GM12878 (cell line): ENCODE measurements at regions of chr2 and their contacts with region 1.

Region 1: GRCh38 chr2:64767670-64768468 is 114.2 kb upstream of the SERTAD2 start:
- DNase-seq: no peak
- ATAC-seq: peak; percentile 94
- H3K4me3 ChIP-seq: peak overlapping the region; percentile 84
- H3K27ac ChIP-seq: peak overlapping the region; percentile 87
- H3K4me1 ChIP-seq: peaks cover 12% of the 10 kb centered on the region
- H3K27me3 ChIP-seq: no peaks in the 10 kb centered on the region
- CTCF ChIP-seq: peak in 2 of 3 experiments; percentile 7 to 29; a peak in 2 of 6 replicates
- EP300 ChIP-seq: peak in 1 of 2 experiments; percentile 40; a peak in 2 of 4 replicates
- POLR2A ChIP-seq: peak; percentile 78
- RAD21 ChIP-seq: no peak

Region 2: DNA sequence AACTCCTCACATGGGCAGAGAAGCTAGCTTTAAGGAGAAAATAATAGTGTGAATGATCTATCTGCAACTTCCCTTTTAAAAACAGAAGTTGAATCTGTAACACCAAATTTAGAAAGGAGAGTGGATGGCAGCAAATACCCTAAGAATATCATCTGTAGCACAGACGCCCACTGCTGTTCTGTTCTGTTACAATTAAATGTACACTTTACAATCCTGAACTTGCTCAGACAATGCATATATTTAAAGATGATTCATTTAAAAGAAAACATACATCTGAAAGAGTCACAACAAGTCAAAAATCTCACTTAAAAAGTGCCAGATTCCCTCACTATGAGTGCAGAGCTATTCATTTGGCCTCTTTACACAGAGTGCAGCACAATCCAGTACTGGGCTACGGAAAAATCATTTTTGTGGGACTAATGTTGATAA is 106.1 kb before region 1 on chr2:
- CTCF ChIA-PET with region 1: interaction called, 4 read pairs
- POLR2A ChIA-PET with region 1: no interaction called
- RAD21 ChIA-PET with region 1: interaction called, 7 read pairs
- SMC1A ChIA-PET with region 1: interaction called, 12 read pairs
- in situ Hi-C with region 1: no loop called
- intact Hi-C with region 1: no loop called
- DNase-seq: no peak
- ATAC-seq: peak; percentile 81
- H3K4me3 ChIP-seq: no peak overlapping the region
- H3K27ac ChIP-seq: peak overlapping the region; percentile 56; the same call in 1 of the 2 replicates
- H3K4me1 ChIP-seq: peaks cover 40% of the 10 kb centered on the region
- H3K27me3 ChIP-seq: no peaks in the 10 kb centered on the region
- CTCF ChIP-seq: peak in 1 of 3 experiments; percentile 23; a peak in 1 of 6 replicates
- EP300 ChIP-seq: peak in 1 of 2 experiments; percentile 33; a peak in 1 of 4 replicates
- POLR2A ChIP-seq: no peak
- RAD21 ChIP-seq: no peak

Region 3: DNA sequence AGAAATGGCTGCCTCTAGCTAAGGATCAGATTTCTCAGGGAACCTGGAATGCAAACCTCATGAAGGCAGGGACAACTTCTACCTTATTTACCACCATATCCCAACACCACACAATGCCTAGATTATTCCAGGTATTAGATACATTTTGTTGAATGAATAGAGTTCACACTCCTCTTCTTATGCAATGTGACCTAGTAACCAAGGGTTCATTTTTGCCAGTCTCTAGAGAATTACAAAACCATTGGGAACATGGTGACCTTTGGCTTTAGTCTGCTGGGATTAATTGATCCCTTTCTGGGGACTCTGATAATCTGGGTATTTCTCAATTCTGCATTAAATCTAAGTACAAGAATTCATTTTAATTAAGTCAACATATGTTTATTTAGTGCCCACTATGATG is 79.0 kb before region 1 on chr2:
- CTCF ChIA-PET with region 1: no interaction called
- POLR2A ChIA-PET with region 1: no interaction called
- RAD21 ChIA-PET with region 1: no interaction called
- SMC1A ChIA-PET with region 1: no interaction called
- in situ Hi-C with region 1: no loop called
- intact Hi-C with region 1: no loop called
- DNase-seq: no peak
- ATAC-seq: no peak
- H3K4me3 ChIP-seq: no peak overlapping the region
- H3K27ac ChIP-seq: no peak overlapping the region
- H3K4me1 ChIP-seq: no peaks in the 10 kb centered on the region
- H3K27me3 ChIP-seq: no peaks in the 10 kb centered on the region
- CTCF ChIP-seq: no peak
- EP300 ChIP-seq: no peak
- POLR2A ChIP-seq: no peak
- RAD21 ChIP-seq: no peak

Region 4: DNA sequence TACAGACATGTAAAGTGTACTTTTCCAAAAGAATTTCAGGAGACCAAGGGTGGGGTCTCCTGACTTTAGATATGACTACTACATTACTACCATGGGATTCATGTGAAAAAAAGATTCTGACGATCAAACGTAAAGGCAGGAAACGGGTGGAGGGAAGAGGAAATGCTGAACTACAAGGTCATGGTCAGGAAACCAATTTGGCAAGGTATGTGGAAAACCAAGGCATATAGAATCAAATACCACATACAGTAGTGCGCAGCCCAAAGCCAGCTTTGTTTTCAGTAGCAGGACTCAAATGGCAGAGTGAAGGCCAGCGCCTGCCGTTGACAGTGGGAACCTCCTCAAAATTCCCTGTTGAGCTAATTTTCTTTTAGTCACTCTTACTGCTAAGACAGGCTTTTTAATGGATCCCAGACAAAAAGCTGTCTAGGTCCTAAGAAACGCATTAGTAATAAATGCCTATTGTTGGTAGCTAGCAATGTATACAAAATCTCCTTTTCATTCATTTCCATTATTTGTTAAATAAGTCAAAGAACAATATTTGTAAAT is 56.5 kb before region 1 on chr2:
- CTCF ChIA-PET with region 1: no interaction called
- POLR2A ChIA-PET with region 1: no interaction called
- RAD21 ChIA-PET with region 1: no interaction called
- SMC1A ChIA-PET with region 1: no interaction called
- in situ Hi-C with region 1: no loop called
- intact Hi-C with region 1: no loop called
- DNase-seq: no peak
- ATAC-seq: no peak
- H3K4me3 ChIP-seq: no peak overlapping the region
- H3K27ac ChIP-seq: no peak overlapping the region
- H3K4me1 ChIP-seq: peaks cover 5% of the 10 kb centered on the region
- H3K27me3 ChIP-seq: no peaks in the 10 kb centered on the region
- CTCF ChIP-seq: no peak
- EP300 ChIP-seq: no peak
- POLR2A ChIP-seq: no peak
- RAD21 ChIP-seq: no peak

Region 5: GRCh38 chr2:64745562-64745961 is 22.3 kb before region 1 on chr2:
- CTCF ChIA-PET with region 1: interaction called, 15 read pairs
- POLR2A ChIA-PET with region 1: interaction called, 58 read pairs
- RAD21 ChIA-PET with region 1: interaction called, 68 read pairs
- SMC1A ChIA-PET with region 1: interaction called, 59 read pairs
- in situ Hi-C with region 1: no loop called
- intact Hi-C with region 1: loop called (anchors 2 kb)
- DNase-seq: no peak
- ATAC-seq: peak; percentile 39
- H3K4me3 ChIP-seq: peak overlapping the region; percentile 46
- H3K27ac ChIP-seq: peak overlapping the region; percentile 10
- H3K4me1 ChIP-seq: no peaks in the 10 kb centered on the region
- H3K27me3 ChIP-seq: no peaks in the 10 kb centered on the region
- CTCF ChIP-seq: no peak
- EP300 ChIP-seq: no peak
- POLR2A ChIP-seq: no peak
- RAD21 ChIP-seq: no peak

Region 6: GRCh38 chr2:64792307-64792706 is 24.4 kb after region 1 on chr2:
- CTCF ChIA-PET with region 1: interaction called, 4 read pairs
- POLR2A ChIA-PET with region 1: interaction called, 19 read pairs
- RAD21 ChIA-PET with region 1: no interaction called
- SMC1A ChIA-PET with region 1: interaction called, 5 read pairs
- in situ Hi-C with region 1: no loop called
- intact Hi-C with region 1: no loop called
- DNase-seq: no peak
- ATAC-seq: peak; percentile 37; the same call in 2 of the 3 replicates
- H3K4me3 ChIP-seq: no peak overlapping the region
- H3K27ac ChIP-seq: no peak overlapping the region
- H3K4me1 ChIP-seq: no peaks in the 10 kb centered on the region
- H3K27me3 ChIP-seq: no peaks in the 10 kb centered on the region
- CTCF ChIP-seq: peak in 1 of 3 experiments; percentile 20; a peak in 1 of 6 replicates
- EP300 ChIP-seq: no peak
- POLR2A ChIP-seq: no peak
- RAD21 ChIP-seq: no peak

Region 7: GRCh38 chr2:64859312-64860212 is 91.7 kb after region 1 on chr2:
- CTCF ChIA-PET with region 1: interaction called, 3 read pairs
- POLR2A ChIA-PET with region 1: interaction called, 3 read pairs
- RAD21 ChIA-PET with region 1: interaction called, 6 read pairs
- SMC1A ChIA-PET with region 1: interaction called, 15 read pairs
- in situ Hi-C with region 1: no loop called
- intact Hi-C with region 1: no loop called
- DNase-seq: no peak
- ATAC-seq: peak; percentile 53
- H3K4me3 ChIP-seq: peak overlapping the region; percentile 65
- H3K27ac ChIP-seq: peak overlapping the region; percentile 91
- H3K4me1 ChIP-seq: peaks cover 54% of the 10 kb centered on the region
- H3K27me3 ChIP-seq: no peaks in the 10 kb centered on the region
- CTCF ChIP-seq: no peak
- EP300 ChIP-seq: no peak
- POLR2A ChIP-seq: peak; percentile 40
- RAD21 ChIP-seq: no peak

Region 8: DNA sequence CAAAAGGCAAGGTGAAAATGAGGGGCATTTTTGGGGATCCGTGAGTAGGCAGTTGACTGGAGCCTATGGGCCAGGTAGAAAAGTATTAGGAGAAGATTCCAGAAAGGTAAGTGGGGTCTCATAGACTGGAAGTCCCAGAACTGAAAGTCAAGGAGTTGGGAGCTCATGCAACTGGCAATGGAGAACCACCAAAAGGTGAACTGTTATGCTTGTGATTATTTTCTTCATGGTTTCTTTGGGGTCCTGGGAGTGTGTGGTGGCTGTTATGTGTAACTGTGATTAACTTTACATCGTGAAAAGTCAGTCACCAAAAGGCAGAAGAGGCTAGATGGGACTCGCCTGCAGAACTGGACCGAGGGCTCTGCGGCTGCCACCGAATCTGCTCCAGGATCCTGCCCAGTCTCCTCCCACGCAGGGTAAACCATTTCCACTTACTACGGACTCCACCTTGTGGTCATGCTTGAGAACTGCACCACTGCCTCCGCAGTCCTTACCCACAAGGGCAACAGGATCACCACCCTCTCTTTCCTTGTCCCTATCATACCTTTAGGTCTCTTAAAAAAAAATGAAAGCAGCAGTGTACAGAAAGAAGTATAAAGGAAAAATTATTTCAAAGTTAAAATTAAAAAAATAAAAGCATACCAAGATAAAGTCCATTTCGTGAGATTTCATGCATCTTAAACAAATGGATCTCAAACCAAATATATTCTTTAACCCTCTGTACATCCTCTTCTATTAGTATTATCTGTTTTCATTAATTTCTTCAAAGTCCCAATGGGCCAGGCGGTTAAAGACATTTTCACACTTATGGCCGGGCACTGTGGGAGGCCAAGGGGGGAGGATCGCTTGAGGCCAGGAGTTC is 272.8 kb after region 1 on chr2:
- CTCF ChIA-PET with region 1: no interaction called
- POLR2A ChIA-PET with region 1: no interaction called
- RAD21 ChIA-PET with region 1: no interaction called
- SMC1A ChIA-PET with region 1: no interaction called
- in situ Hi-C with region 1: no loop called
- intact Hi-C with region 1: no loop called
- DNase-seq: no peak
- ATAC-seq: peak; percentile 99
- H3K4me3 ChIP-seq: no peak overlapping the region
- H3K27ac ChIP-seq: no peak overlapping the region
- H3K4me1 ChIP-seq: peaks cover 2% of the 10 kb centered on the region; the same call in 1 of the 2 replicates
- H3K27me3 ChIP-seq: no peaks in the 10 kb centered on the region
- CTCF ChIP-seq: peak; percentile 93 to 96 (median 95)
- EP300 ChIP-seq: no peak
- POLR2A ChIP-seq: no peak
- RAD21 ChIP-seq: peak; percentile 83

Region 9: GRCh38 chr2:65576861-65577601 is 809.2 kb after region 1 on chr2:
- CTCF ChIA-PET with region 1: no interaction called
- POLR2A ChIA-PET with region 1: no interaction called
- RAD21 ChIA-PET with region 1: no interaction called
- SMC1A ChIA-PET with region 1: no interaction called
- in situ Hi-C with region 1: no loop called
- intact Hi-C with region 1: no loop called
- DNase-seq: no peak
- ATAC-seq: no peak
- H3K4me3 ChIP-seq: no peak overlapping the region
- H3K27ac ChIP-seq: no peak overlapping the region
- H3K4me1 ChIP-seq: peaks cover 3% of the 10 kb centered on the region; the same call in 1 of the 2 replicates
- H3K27me3 ChIP-seq: no peaks in the 10 kb centered on the region; a peak in 1 of 4 replicates
- CTCF ChIP-seq: no peak
- EP300 ChIP-seq: no peak
- POLR2A ChIP-seq: no peak
- RAD21 ChIP-seq: no peak